Activated naive CD4-positive, alpha-beta T cell treated with anti-CD3 and anti-CD28 coated beads for 36 hours (primary cell): ENCODE measurements at regions of chr2 and their contacts with region 1.

Region 1: DNA sequence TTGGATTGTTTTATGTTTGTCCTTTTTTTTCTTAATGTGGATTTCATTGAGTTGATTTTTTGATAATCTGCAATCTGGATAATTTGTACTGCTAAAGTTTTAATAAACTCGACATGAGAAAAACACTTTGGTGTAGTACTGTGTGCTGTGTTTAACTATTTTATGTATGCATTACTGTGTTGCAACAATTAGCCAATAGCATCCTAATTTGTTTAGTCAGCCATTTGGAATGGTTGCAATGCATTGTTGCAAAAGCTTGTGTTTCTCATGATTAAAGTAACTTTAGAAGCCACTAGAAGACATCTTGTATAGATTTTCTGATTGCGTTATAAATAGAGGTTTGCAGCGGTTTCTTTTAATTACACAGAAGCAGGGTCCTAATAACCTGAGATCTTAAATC is 53.5 kb downstream of the PPIG start:
- DNase-seq: no peak
- H3K4me3 Mint-ChIP-seq: no peak overlapping the region
- H3K27ac Mint-ChIP-seq: no peak overlapping the region
- H3K4me1 Mint-ChIP-seq: no peaks in the 10 kb centered on the region
- H3K27me3 Mint-ChIP-seq: no peaks in the 10 kb centered on the region

Region 2: GRCh38 chr2:169599568-169599967 is 38.1 kb before region 1 on chr2:
- CTCF ChIA-PET with region 1: no interaction called
- intact Hi-C with region 1: loop called (anchors 5 kb)
- DNase-seq: no peak
- H3K4me3 Mint-ChIP-seq: no peak overlapping the region
- H3K27ac Mint-ChIP-seq: no peak overlapping the region
- H3K4me1 Mint-ChIP-seq: peaks cover 19% of the 10 kb centered on the region
- H3K27me3 Mint-ChIP-seq: no peaks in the 10 kb centered on the region

Region 3: GRCh38 chr2:169664978-169665930 is 27.6 kb after region 1 on chr2:
- CTCF ChIA-PET with region 1: no interaction called
- intact Hi-C with region 1: no loop called
- DNase-seq: no peak
- H3K4me3 Mint-ChIP-seq: no peak overlapping the region
- H3K27ac Mint-ChIP-seq: no peak overlapping the region
- H3K4me1 Mint-ChIP-seq: no peaks in the 10 kb centered on the region
- H3K27me3 Mint-ChIP-seq: peaks cover 2% of the 10 kb centered on the region

Region 4: GRCh38 chr2:169676357-169676756 is 38.7 kb after region 1 on chr2:
- CTCF ChIA-PET with region 1: no interaction called
- intact Hi-C with region 1: no loop called
- DNase-seq: no peak
- H3K4me3 Mint-ChIP-seq: no peak overlapping the region
- H3K27ac Mint-ChIP-seq: no peak overlapping the region
- H3K4me1 Mint-ChIP-seq: no peaks in the 10 kb centered on the region
- H3K27me3 Mint-ChIP-seq: peaks cover 12% of the 10 kb centered on the region

Region 5: GRCh38 chr2:170651624-170652325 is 1014.2 kb after region 1 on chr2:
- CTCF ChIA-PET with region 1: no interaction called
- intact Hi-C with region 1: no loop called
- DNase-seq: peak; percentile 44
- H3K4me3 Mint-ChIP-seq: peak overlapping the region; percentile 17
- H3K27ac Mint-ChIP-seq: no peak overlapping the region
- H3K4me1 Mint-ChIP-seq: peaks cover 19% of the 10 kb centered on the region
- H3K27me3 Mint-ChIP-seq: peaks cover 3% of the 10 kb centered on the region